Heart left ventricle (tissue), 16 donors: ENCODE measurements at regions of chr6 and their contacts with region 1.

Region 1: GRCh38 chr6:70107852-70108629 is 194.8 kb downstream of the COL9A1 start:
- DNase-seq: no peak
- ATAC-seq: no peak
- H3K4me3 ChIP-seq: no peak overlapping the region
- H3K27ac ChIP-seq: no peak overlapping the region
- H3K4me1 ChIP-seq: no peaks in the 10 kb centered on the region
- H3K27me3 ChIP-seq: no peaks in the 10 kb centered on the region
- CTCF ChIP-seq: peak; percentile 30 to 74 (median 60)
- POLR2A ChIP-seq: no peak

Region 2: GRCh38 chr6:68634726-68635411 is 1473.2 kb before region 1 on chr6 and contains the start of gene ADGRB3:
- intact Hi-C with region 1: loop called in 1 of 10 experiments (anchors 10 kb)
- DNase-seq: peak; percentile 83 to 91 (median 85)
- ATAC-seq: peak; percentile 84 to 97 (median 93)
- H3K4me3 ChIP-seq: peak within 1 kb of the TSS; percentile 33 to 77 (median 69)
- H3K27ac ChIP-seq: peak within 1 kb of the TSS; percentile 37 to 85 (median 74)
- H3K4me1 ChIP-seq: peaks cover 0 to 21% (median 0%) of the 10 kb centered on the region in 12 donors
- H3K27me3 ChIP-seq: peaks cover 0 to 21% (median 17%) of the 10 kb centered on the region in 9 donors
- CTCF ChIP-seq: peak in 5 of 12 donors; percentile 4 to 33 (median 20)
- POLR2A ChIP-seq: peak in 1 of 2 donors; percentile 41
- total RNA-seq, gene ADGRB3: 0.51 to 2.5 (median 1.1) TPM

Region 3: GRCh38 chr6:68876792-68877493 is 1231.1 kb before region 1 on chr6:
- intact Hi-C with region 1: loop called in 2 of 10 experiments (anchors 5 to 10 kb)
- DNase-seq: no peak
- ATAC-seq: no peak
- H3K4me3 ChIP-seq: no peak overlapping the region
- H3K27ac ChIP-seq: no peak overlapping the region
- H3K4me1 ChIP-seq: no peaks in the 10 kb centered on the region
- H3K27me3 ChIP-seq: no peaks in the 10 kb centered on the region
- CTCF ChIP-seq: peak; percentile 21 to 62 (median 46)
- POLR2A ChIP-seq: no peak

Region 4: GRCh38 chr6:69719602-69720193 is 388.3 kb before region 1 on chr6:
- intact Hi-C with region 1: loop called in 2 of 10 experiments (anchors 10 kb)
- DNase-seq: no peak
- ATAC-seq: no peak
- H3K4me3 ChIP-seq: no peak overlapping the region
- H3K27ac ChIP-seq: no peak overlapping the region
- H3K4me1 ChIP-seq: no peaks in the 10 kb centered on the region
- H3K27me3 ChIP-seq: no peaks in the 10 kb centered on the region
- CTCF ChIP-seq: peak in 7 of 12 donors; percentile 17 to 46 (median 28)
- POLR2A ChIP-seq: no peak

Region 5: DNA sequence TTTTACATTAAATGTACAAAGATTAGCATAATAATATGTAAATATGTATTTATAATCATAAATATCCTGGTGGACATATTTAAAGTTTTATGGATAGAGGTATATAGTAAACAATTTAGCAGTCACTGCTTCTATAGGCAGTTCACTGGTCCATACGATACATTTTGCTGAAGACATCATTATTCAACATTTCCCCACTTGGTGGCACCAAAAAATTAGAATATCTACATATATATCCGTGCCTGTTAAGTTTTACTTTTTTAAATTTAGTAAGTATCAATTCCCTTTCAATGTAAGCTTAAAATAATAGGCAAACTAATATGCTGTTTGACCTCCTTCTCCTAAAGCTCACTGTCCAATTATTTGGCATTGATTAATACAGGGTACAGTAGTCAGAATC is 375.4 kb before region 1 on chr6:
- intact Hi-C with region 1: loop called in 4 of 10 experiments (anchors 5 to 10 kb)
- DNase-seq: no peak
- ATAC-seq: no peak
- H3K4me3 ChIP-seq: no peak overlapping the region
- H3K27ac ChIP-seq: no peak overlapping the region
- H3K4me1 ChIP-seq: no peaks in the 10 kb centered on the region
- H3K27me3 ChIP-seq: no peaks in the 10 kb centered on the region
- CTCF ChIP-seq: peak in 3 of 12 donors; percentile 6 to 18 (median 7)
- POLR2A ChIP-seq: no peak

Region 6: GRCh38 chr6:69835414-69836179 is 272.4 kb before region 1 on chr6:
- intact Hi-C with region 1: loop called (anchors 2 to 10 kb)
- DNase-seq: no peak
- ATAC-seq: peak in 2 of 4 donors; percentile 42 to 69
- H3K4me3 ChIP-seq: no peak overlapping the region
- H3K27ac ChIP-seq: no peak overlapping the region
- H3K4me1 ChIP-seq: peaks cover 0 to 5% (median 0%) of the 10 kb centered on the region in 12 donors
- H3K27me3 ChIP-seq: peaks cover 0 to 7% (median 0%) of the 10 kb centered on the region in 9 donors
- CTCF ChIP-seq: peak; percentile 58 to 89 (median 76)
- POLR2A ChIP-seq: no peak

Region 7: DNA sequence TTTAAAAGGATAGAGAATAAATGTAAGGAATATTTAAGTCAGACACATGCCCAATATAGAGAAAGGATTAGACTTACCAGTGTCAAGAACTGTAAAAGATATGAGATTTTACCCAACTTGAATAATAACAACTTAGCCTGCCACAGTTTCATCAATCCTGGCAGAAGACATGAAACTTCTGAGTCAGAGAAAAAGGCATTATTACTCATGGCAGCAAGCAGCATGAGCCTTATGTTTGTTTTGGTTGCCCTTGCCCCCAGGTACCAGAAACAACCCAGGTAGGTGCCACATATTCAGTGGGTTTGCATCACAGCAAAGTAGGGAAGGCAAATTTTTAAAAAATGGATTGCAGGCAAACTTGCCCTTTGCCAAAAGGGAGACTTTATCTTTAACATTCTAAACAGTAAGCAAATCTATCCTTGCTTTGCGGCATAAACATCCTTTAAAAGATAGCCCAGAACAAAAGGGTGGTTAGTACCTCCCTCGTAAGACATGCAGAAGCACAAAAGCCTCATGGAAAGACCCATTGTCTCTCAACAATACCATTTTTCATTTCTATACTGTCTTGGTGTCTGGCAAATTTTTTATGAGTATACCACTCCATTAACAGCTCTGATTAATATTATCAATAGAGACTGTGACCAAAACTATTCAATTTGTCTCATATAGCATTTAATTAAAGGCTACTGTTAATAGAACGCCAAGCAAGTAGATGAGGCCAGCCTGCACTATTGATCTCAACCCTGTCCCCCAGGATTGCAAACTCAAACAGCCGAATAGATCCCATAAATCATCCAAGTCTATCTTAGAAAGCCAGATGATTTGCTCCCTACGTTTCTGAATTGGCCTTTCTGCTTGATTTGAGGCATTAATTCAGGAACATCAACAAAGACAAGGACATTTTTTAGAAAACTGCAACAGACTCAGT is 56.6 kb before region 1 on chr6:
- intact Hi-C with region 1: no loop called
- DNase-seq: no peak
- ATAC-seq: no peak
- H3K4me3 ChIP-seq: no peak overlapping the region
- H3K27ac ChIP-seq: no peak overlapping the region
- H3K4me1 ChIP-seq: no peaks in the 10 kb centered on the region
- H3K27me3 ChIP-seq: no peaks in the 10 kb centered on the region
- CTCF ChIP-seq: no peak
- POLR2A ChIP-seq: no peak